Activated B cell treated with CpG ODN at 0.5 μM for 24 hours (primary cell): ENCODE measurements at regions of chr12 and their contacts with region 1.

Region 1: DNA sequence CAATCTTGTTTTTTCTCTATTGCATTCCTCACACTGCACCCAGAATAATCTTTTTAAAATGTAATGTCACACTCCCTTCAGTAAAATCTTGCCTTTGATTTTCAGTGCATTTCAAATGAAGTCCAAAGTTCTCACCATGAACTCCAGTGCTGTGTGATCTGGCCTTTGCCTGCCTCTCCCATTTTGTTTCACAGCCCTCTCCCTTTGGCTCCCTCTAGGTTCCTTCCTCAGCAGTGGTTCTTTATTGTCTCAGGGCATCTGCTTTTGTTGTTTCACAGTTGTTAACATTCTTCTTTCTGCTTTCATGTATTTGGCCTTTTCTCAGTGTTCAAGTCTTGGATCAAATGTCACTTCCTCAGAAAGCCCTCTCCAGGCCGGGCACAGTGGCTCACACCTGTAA is 84.5 kb upstream of the AMN1 start:
- DNase-seq: no peak
- ATAC-seq: no peak
- H3K4me3 Mint-ChIP-seq: no peak overlapping the region
- H3K27ac Mint-ChIP-seq: peak overlapping the region; percentile 69
- H3K4me1 Mint-ChIP-seq: peaks cover 45% of the 10 kb centered on the region
- H3K27me3 Mint-ChIP-seq: no peaks in the 10 kb centered on the region
- CTCF ChIP-seq: no peak

Region 2: DNA sequence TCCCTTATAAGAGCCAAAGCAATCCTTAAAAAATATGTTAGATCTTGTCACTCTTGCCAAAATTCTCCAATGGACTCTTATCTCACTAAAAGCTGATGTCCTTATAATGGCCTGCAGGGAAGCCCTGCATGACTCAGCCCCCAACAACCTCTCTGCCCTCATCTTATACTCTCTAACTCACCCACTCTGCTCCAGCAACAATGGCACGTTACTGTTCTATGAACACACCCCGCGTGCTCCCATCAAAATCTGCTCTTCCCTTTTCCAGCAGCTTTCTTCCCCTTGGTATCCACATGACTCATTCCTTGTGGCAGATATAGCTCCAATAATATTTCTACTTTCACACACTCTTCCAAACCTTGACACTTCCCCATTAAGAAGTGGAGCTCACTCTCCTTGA is 330.5 kb before region 1 on chr12:
- CTCF ChIA-PET with region 1: no interaction called
- POLR2A ChIA-PET with region 1: no interaction called
- intact Hi-C with region 1: no loop called
- DNase-seq: no peak
- ATAC-seq: no peak
- H3K4me3 Mint-ChIP-seq: no peak overlapping the region
- H3K27ac Mint-ChIP-seq: no peak overlapping the region
- H3K4me1 Mint-ChIP-seq: peaks cover 52% of the 10 kb centered on the region
- H3K27me3 Mint-ChIP-seq: no peaks in the 10 kb centered on the region
- CTCF ChIP-seq: no peak

Region 3: GRCh38 chr12:31859232-31859977 is 46.1 kb after region 1 on chr12:
- CTCF ChIA-PET with region 1: no interaction called
- POLR2A ChIA-PET with region 1: interaction called, 9 read pairs
- intact Hi-C with region 1: loop called (anchors 2 kb)
- DNase-seq: peak; percentile 35
- ATAC-seq: peak; percentile 93
- H3K4me3 Mint-ChIP-seq: peak overlapping the region; percentile 61
- H3K27ac Mint-ChIP-seq: peak overlapping the region; percentile 87
- H3K4me1 Mint-ChIP-seq: peaks cover 31% of the 10 kb centered on the region
- H3K27me3 Mint-ChIP-seq: no peaks in the 10 kb centered on the region
- CTCF ChIP-seq: no peak

Region 4: DNA sequence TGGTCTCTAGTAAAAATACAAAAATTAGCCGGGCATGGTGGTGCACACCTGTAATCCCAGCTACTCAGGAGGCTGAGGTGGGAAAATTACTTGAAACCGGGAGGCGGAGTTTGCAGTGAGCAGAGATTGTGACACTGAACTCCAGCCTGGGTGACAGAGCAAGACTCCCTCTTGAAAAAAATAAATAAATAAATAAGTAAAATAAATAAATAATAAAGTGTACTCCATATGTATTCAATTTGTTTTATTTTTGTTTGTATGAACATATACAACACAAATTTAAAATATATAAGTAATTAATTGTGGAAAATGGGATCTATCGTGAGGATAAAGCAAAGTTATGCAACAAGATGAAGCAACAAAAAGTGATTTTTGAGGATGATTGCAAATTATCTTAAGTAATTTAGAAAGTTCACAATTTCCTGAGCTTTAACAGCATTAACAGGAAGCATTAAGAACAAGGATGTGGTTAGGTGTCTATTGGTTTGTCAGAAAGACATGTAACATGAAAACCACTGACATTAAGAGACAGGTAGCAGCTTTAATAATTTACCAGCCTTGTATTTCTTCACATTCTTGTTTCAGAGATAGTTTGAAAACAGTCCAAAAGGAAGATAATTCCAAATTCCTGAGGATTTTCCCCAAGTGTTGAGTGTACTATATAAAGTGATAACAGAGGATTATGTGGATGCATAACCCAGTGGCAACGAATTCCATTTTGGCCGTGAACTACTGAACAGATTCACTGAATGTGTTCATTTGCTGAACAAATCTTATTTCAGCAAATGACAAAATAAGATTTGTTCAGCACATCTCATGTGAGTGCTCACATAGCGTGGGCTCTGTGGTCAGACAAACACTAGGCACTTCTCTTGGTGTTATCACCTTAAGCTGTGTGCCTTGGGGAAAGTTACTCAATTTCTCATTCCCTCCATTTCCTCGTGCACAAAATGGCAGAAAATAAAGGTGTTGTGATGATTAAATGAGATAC is 77.3 kb after region 1 on chr12:
- CTCF ChIA-PET with region 1: no interaction called
- POLR2A ChIA-PET with region 1: interaction called, 41 read pairs
- intact Hi-C with region 1: no loop called
- DNase-seq: no peak
- ATAC-seq: peak; percentile 43
- H3K4me3 Mint-ChIP-seq: peak overlapping the region; percentile 45
- H3K27ac Mint-ChIP-seq: peak overlapping the region; percentile 82
- H3K4me1 Mint-ChIP-seq: peaks cover 71% of the 10 kb centered on the region
- H3K27me3 Mint-ChIP-seq: no peaks in the 10 kb centered on the region
- CTCF ChIP-seq: no peak

Region 5: DNA sequence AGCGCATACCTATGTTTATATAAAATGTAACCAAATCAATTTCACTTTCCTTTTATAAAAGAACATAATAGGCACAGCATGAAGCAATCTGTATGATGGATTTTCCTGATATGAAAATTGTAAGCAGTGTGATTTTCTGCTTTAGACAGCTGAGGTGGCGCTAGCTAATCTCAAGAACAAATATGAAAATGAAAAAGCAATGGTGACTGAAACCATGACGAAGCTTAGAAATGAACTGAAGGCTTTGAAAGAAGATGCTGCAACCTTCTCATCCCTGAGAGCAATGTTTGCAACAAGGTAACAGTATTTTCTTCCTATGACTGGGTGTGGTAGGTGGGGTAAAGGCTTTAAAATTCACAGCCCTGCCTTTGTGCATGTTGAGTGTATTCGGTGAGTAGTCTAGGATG is 521.1 kb after region 1 on chr12:
- CTCF ChIA-PET with region 1: no interaction called
- POLR2A ChIA-PET with region 1: no interaction called
- intact Hi-C with region 1: no loop called
- DNase-seq: no peak
- ATAC-seq: no peak
- H3K4me3 Mint-ChIP-seq: no peak overlapping the region
- H3K27ac Mint-ChIP-seq: no peak overlapping the region
- H3K4me1 Mint-ChIP-seq: no peaks in the 10 kb centered on the region
- H3K27me3 Mint-ChIP-seq: no peaks in the 10 kb centered on the region
- CTCF ChIP-seq: no peak